ENCODE measurements at regions of chr4 and their contacts with region 1.

Region 1: DNA sequence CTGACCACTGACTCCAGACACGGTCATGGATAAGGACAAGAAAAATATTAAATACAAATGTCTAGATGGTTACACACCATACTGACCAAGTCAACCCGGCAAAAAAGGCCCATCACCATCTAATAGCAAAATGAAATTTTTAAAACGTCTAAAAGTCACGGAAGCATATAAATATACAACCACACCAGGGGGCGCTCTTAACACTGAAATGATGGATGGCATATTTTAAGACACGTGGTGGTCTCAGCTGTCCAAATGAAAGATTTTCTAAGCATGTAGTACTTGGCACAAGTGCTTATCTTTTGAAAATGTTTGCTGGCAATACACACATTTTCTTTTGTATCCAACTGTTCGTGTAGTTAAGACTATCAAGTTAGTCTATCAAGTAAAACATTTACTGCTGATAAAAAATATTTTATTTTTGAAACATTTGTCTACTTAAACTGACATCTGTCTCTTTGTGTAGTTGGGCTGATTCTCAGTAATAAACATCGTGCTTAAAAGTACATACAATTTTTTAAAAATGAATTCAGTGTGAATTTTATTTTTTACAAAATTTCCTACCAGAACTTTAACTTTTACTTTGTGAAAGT is 64.6 kb downstream of the COX7B2 start:
- DNase-seq: peak; percentile 79
- ATAC-seq: peak; percentile 55
- H3K4me3 Mint-ChIP-seq: no peak overlapping the region
- H3K27ac Mint-ChIP-seq: no peak overlapping the region
- H3K4me1 Mint-ChIP-seq: no peaks in the 10 kb centered on the region
- H3K27me3 Mint-ChIP-seq: no peaks in the 10 kb centered on the region
- CTCF ChIP-seq: peak; percentile 81

Region 2: DNA sequence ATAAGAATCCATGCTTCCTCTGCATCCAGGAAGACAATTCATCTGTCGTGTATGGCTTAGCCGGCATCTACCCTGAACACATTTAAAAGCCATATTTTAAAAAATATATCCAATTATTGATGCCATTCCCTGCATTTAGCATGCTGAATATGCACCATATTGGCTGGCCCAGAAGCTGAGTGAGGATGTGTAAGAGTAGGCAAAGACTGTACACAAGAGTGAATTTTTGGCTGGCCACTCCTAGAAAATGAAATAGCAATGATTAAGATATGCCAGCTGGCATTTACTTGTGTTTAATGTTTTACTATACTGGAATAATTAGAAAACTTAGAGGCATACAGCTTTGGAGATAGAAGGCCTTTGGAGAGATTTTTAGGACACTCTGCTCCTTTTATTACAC is 123.2 kb after region 1 on chr4:
- CTCF ChIA-PET with region 1: no interaction called
- POLR2A ChIA-PET with region 1: no interaction called
- intact Hi-C with region 1: no loop called
- DNase-seq: no peak
- ATAC-seq: no peak
- H3K4me3 Mint-ChIP-seq: no peak overlapping the region
- H3K27ac Mint-ChIP-seq: no peak overlapping the region
- H3K4me1 Mint-ChIP-seq: no peaks in the 10 kb centered on the region
- H3K27me3 Mint-ChIP-seq: peaks cover 9% of the 10 kb centered on the region
- CTCF ChIP-seq: no peak

Region 3: DNA sequence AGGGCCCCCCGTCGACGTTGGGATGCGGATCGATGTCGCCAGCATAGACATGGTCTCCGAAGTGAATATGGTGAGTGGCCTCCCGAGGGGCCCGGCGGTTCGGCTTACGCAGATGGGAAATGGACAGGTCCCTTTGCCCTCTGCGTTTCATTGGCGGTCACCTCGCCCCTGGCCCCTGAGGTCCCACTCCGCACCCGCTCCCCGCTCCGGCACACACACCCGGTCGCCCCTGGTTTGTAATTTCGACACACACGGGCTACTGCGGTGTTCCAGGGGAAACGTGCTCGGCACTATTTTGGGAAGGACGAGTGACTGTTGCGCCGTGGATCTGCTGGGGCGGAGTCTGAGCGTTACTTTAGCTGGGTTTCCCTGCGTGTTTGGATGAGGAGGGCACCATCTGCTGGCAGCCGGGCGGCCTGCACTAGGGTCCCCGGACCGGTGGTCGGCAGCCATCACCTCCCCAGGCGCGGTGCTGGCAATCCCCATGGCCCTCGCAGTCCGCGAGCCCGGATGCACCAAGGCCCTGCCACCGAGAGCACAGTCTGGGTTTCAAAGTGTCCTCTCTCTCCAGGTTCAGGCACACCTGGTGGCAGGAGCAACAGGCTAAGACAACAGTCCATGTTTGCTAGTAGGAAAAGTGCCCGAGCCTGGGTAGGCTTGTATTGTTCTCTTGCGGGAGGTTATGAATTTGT is 188.1 kb after region 1 on chr4:
- CTCF ChIA-PET with region 1: interaction called, 3 read pairs
- POLR2A ChIA-PET with region 1: no interaction called
- intact Hi-C with region 1: loop called (anchors 10 kb)
- DNase-seq: peak; percentile 76
- ATAC-seq: peak; percentile 92
- H3K4me3 Mint-ChIP-seq: peak overlapping the region; percentile 52
- H3K27ac Mint-ChIP-seq: no peak overlapping the region
- H3K4me1 Mint-ChIP-seq: peaks cover 19% of the 10 kb centered on the region
- H3K27me3 Mint-ChIP-seq: peaks cover 28% of the 10 kb centered on the region
- CTCF ChIP-seq: peak; percentile 77

Region 4: GRCh38 chr4:47383829-47384427 is 539.5 kb after region 1 on chr4:
- CTCF ChIA-PET with region 1: interaction called, 6 read pairs
- POLR2A ChIA-PET with region 1: no interaction called
- intact Hi-C with region 1: loop called (anchors 10 kb)
- DNase-seq: no peak
- ATAC-seq: no peak
- H3K4me3 Mint-ChIP-seq: no peak overlapping the region
- H3K27ac Mint-ChIP-seq: no peak overlapping the region
- H3K4me1 Mint-ChIP-seq: no peaks in the 10 kb centered on the region
- H3K27me3 Mint-ChIP-seq: peaks cover 8% of the 10 kb centered on the region
- CTCF ChIP-seq: peak; percentile 77